Naive thymus-derived CD4-positive, alpha-beta T cell (primary cell): ENCODE measurements at regions of chr5 and their contacts with region 1.

Region 1: DNA sequence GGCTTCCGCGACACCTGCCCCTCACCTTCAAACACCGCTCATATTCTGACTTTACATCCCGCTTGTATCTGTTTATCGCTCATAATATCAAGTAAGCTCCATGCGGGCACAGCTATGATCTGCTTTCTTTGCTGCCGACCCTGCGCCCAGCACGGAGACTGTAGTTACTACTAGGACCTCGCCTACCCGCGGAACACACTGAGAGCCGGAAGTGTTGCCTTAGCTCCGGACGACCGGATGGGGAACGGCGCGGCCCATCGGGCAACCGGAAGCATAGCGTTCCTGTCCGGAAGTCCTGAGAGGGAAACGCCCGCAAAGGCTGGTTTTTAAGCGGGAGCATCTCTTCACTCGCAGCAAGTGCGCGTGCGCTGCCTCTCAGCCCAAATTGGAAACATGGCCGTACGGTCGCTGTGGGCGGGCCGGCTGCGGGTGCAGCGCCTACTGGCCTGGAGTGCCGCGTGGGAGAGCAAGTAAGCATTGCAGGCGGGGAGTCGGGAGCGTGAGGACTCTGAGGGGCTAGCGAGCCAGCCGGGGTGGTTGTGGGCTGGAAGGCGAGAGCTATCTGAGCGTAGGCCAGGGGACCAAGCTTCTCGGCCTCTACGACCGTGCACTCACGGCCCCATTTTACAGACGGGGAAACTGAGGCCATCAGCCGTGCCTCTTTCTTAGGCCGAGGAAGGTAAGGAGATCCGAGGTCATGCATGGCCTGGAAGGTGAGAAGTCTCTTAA is at the start of gene GRPEL2:
- DNase-seq: peak; percentile 62 to 90 (median 80)
- ATAC-seq: peak; percentile 78
- H3K4me3 ChIP-seq: peak within 1 kb of the TSS; percentile 90
- H3K4me3 Mint-ChIP-seq: peak within 1 kb of the TSS; percentile 80 to 97 (median 93)
- H3K27ac ChIP-seq: peak within 1 kb of the TSS; percentile 75
- H3K27ac Mint-ChIP-seq: peak within 1 kb of the TSS; percentile 89 to 95 (median 92)
- H3K4me1 ChIP-seq: peaks cover 37 to 43% of the 10 kb centered on the region in 2 donors
- H3K4me1 Mint-ChIP-seq: peaks cover 47 to 69% (median 59%) of the 10 kb centered on the region in 7 donors
- H3K27me3 ChIP-seq: no peaks in the 10 kb centered on the region
- H3K27me3 Mint-ChIP-seq: peaks cover 0 to 1% (median 0%) of the 10 kb centered on the region in 5 donors
- total RNA-seq, gene GRPEL2: 12.0 to 40.1 (median 32.2) TPM

Region 2: DNA sequence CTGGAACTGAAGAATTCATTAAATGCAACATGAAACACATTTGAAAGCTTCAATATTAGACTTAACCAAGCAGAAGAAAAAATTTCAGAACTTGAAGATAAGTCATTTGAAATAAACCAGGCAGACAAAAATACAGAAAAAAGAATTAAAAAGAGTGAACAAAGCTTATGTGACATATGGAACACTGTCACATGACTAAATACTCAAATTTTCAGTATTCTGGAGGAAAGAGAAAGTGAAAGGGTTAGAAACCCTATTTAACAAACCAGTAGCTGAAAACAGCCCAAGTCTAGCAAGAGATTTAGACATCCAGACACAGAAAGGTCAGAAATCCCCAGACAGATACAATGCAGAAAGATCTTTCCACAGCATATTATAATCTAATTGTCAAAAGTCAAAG is 245.4 kb before region 1 on chr5:
- CTCF ChIA-PET with region 1: no interaction called
- POLR2A ChIA-PET with region 1: no interaction called
- intact Hi-C with region 1: no loop called
- DNase-seq: no peak
- ATAC-seq: no peak
- H3K4me3 ChIP-seq: no peak overlapping the region
- H3K4me3 Mint-ChIP-seq: no peak overlapping the region
- H3K27ac ChIP-seq: no peak overlapping the region
- H3K27ac Mint-ChIP-seq: no peak overlapping the region
- H3K4me1 ChIP-seq: no peaks in the 10 kb centered on the region
- H3K4me1 Mint-ChIP-seq: peaks cover 0 to 4% (median 0%) of the 10 kb centered on the region in 7 donors
- H3K27me3 ChIP-seq: no peaks in the 10 kb centered on the region
- H3K27me3 Mint-ChIP-seq: peaks cover 0 to 17% (median 12%) of the 10 kb centered on the region in 5 donors

Region 3: GRCh38 chr5:149240354-149240998 is 104.8 kb before region 1 on chr5:
- CTCF ChIA-PET with region 1: no interaction called
- POLR2A ChIA-PET with region 1: interaction called, 3 read pairs
- intact Hi-C with region 1: loop called in 1 of 2 experiments (anchors 1 kb)
- DNase-seq: peak; percentile 46 to 94 (median 90)
- ATAC-seq: peak; percentile 93
- H3K4me3 ChIP-seq: peak overlapping the region; percentile 2
- H3K4me3 Mint-ChIP-seq: peak overlapping the region; percentile 38 to 79 (median 66)
- H3K27ac ChIP-seq: peak overlapping the region; percentile 67
- H3K27ac Mint-ChIP-seq: peak overlapping the region; percentile 83 to 98 (median 93)
- H3K4me1 ChIP-seq: peaks cover 21 to 39% of the 10 kb centered on the region in 2 donors
- H3K4me1 Mint-ChIP-seq: peaks cover 8 to 71% (median 43%) of the 10 kb centered on the region in 7 donors
- H3K27me3 ChIP-seq: no peaks in the 10 kb centered on the region
- H3K27me3 Mint-ChIP-seq: peaks cover 0 to 23% (median 1%) of the 10 kb centered on the region in 5 donors

Region 4: GRCh38 chr5:149317281-149318048 is 27.8 kb before region 1 on chr5:
- CTCF ChIA-PET with region 1: interaction called, 4 read pairs
- POLR2A ChIA-PET with region 1: interaction called, 7 read pairs
- intact Hi-C with region 1: loop called in 1 of 2 experiments (anchors 1 kb)
- DNase-seq: peak in 7 of 9 donors; percentile 18 to 66 (median 57)
- ATAC-seq: peak; percentile 77
- H3K4me3 ChIP-seq: no peak overlapping the region
- H3K4me3 Mint-ChIP-seq: no peak overlapping the region
- H3K27ac ChIP-seq: no peak overlapping the region
- H3K27ac Mint-ChIP-seq: peak overlapping the region in 1 of 9 donors; percentile 4
- H3K4me1 ChIP-seq: peaks cover 0 to 3% of the 10 kb centered on the region in 2 donors
- H3K4me1 Mint-ChIP-seq: peaks cover 0 to 5% (median 4%) of the 10 kb centered on the region in 7 donors
- H3K27me3 ChIP-seq: no peaks in the 10 kb centered on the region
- H3K27me3 Mint-ChIP-seq: no peaks in the 10 kb centered on the region

Region 5: GRCh38 chr5:149367249-149367971 is 22.1 kb after region 1 on chr5:
- CTCF ChIA-PET with region 1: interaction called, 24 read pairs
- POLR2A ChIA-PET with region 1: interaction called, 258 read pairs
- intact Hi-C with region 1: loop called in 1 of 2 experiments (anchors 1 kb)
- DNase-seq: peak in 7 of 9 donors; percentile 25 to 65 (median 49)
- ATAC-seq: peak; percentile 79
- H3K4me3 ChIP-seq: no peak overlapping the region
- H3K4me3 Mint-ChIP-seq: no peak overlapping the region
- H3K27ac ChIP-seq: no peak overlapping the region
- H3K27ac Mint-ChIP-seq: peak overlapping the region in 7 of 9 donors; percentile 13 to 68 (median 41)
- H3K4me1 ChIP-seq: peaks cover 0 to 7% of the 10 kb centered on the region in 2 donors
- H3K4me1 Mint-ChIP-seq: peaks cover 3 to 48% (median 27%) of the 10 kb centered on the region in 7 donors
- H3K27me3 ChIP-seq: no peaks in the 10 kb centered on the region
- H3K27me3 Mint-ChIP-seq: no peaks in the 10 kb centered on the region

Region 6: GRCh38 chr5:149526845-149527580 is 181.7 kb after region 1 on chr5:
- CTCF ChIA-PET with region 1: no interaction called
- POLR2A ChIA-PET with region 1: no interaction called
- intact Hi-C with region 1: no loop called
- DNase-seq: no peak
- ATAC-seq: no peak
- H3K4me3 ChIP-seq: no peak overlapping the region
- H3K4me3 Mint-ChIP-seq: peak overlapping the region in 9 of 10 donors; percentile 12 to 65 (median 51)
- H3K27ac ChIP-seq: no peak overlapping the region
- H3K27ac Mint-ChIP-seq: peak overlapping the region in 8 of 9 donors; percentile 0 to 86 (median 54)
- H3K4me1 ChIP-seq: peaks cover 37 to 51% of the 10 kb centered on the region in 2 donors
- H3K4me1 Mint-ChIP-seq: peaks cover 61 to 100% (median 89%) of the 10 kb centered on the region in 7 donors
- H3K27me3 ChIP-seq: no peaks in the 10 kb centered on the region
- H3K27me3 Mint-ChIP-seq: no peaks in the 10 kb centered on the region

Region 7: DNA sequence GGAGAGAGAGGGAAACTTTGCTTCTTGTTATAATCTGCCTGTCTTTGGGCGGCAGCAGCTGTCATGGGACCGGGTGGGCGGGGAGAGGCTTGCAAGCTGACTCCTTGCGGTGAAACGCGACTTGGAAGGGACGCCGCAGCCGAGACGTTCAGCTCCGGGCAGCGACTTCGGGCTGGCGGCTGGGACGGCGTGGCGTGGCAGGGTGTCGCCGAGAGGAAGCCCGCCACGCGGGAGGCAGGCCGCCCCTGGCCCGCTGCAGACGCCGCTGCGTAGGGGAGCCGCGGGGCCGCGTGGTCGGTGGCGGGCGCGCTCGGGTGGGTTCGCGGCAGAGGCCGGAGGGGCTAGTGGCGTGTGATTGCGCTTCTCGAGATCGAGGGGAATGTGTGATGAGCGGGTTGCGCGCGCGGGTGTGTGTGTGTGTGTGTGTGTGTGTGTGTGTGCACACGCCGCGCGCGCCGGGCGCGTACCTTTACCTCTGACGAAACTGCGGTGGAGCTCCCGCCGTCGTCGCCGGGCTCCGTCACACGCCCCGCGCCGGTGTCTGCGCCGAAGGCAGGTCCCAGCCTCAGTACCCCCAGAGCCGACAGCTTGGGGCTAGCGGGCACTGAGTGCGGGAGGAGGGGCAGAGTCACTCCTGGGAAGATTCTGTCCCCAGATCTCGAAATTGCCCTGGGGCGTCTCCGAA is 386.5 kb after region 1 on chr5:
- CTCF ChIA-PET with region 1: no interaction called
- POLR2A ChIA-PET with region 1: no interaction called
- intact Hi-C with region 1: loop called (anchors 2 to 10 kb)
- DNase-seq: peak; percentile 52 to 84 (median 67)
- ATAC-seq: peak; percentile 64
- H3K4me3 ChIP-seq: peak overlapping the region; percentile 84
- H3K4me3 Mint-ChIP-seq: peak overlapping the region; percentile 77 to 92 (median 87)
- H3K27ac ChIP-seq: peak overlapping the region; percentile 67
- H3K27ac Mint-ChIP-seq: peak overlapping the region in 8 of 9 donors; percentile 38 to 93 (median 78)
- H3K4me1 ChIP-seq: no peaks in the 10 kb centered on the region
- H3K4me1 Mint-ChIP-seq: peaks cover 0 to 17% (median 8%) of the 10 kb centered on the region in 7 donors
- H3K27me3 ChIP-seq: no peaks in the 10 kb centered on the region
- H3K27me3 Mint-ChIP-seq: peaks cover 0 to 18% (median 0%) of the 10 kb centered on the region in 5 donors

Region 8: DNA sequence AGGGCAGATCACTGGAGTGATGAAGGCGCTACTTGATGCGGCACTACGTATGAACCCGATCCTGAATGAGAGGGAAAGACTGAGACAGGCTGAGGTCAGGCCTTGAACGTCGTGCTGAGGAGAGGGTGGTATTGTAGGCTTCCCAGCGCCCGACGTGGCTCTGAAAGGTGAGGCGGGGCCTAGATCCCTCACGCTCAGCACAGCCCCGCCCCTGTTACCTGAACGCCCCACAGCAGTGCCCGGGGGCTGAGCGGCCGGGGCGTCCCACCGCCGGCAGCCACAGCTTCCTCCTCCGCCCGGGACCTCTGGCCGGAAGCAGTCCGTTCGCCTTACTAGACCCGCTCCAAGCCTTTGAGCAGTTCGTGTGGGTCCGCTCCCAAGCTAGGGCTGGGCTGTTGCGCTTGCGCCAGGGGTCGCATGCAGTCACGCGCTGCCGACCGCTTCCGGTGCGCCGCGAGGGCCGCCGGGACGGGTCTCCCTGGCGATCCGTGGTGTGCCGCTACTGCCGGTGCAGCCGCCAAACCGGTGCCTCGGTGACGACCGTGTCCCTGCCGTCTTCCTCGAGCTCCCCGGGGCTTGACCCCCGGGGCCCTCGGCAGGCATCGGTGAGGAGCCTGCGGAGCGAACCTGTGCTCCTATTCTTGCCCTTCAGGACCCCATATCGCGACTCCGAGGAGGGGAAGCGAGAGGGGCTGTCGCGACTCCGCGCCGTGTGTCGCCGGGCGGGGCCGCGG is 655.1 kb after region 1 on chr5 and contains the starts of genes HMGXB3 and TIGD6:
- CTCF ChIA-PET with region 1: no interaction called
- POLR2A ChIA-PET with region 1: no interaction called
- intact Hi-C with region 1: loop called in 1 of 2 experiments (anchors 2 kb)
- DNase-seq: peak; percentile 64 to 87 (median 74)
- ATAC-seq: peak; percentile 83
- H3K4me3 ChIP-seq: peak within 1 kb of the TSS; percentile 76
- H3K4me3 Mint-ChIP-seq: peak within 1 kb of the TSS; percentile 86 to 99 (median 93)
- H3K27ac ChIP-seq: peak within 1 kb of the TSS; percentile 80
- H3K27ac Mint-ChIP-seq: peak within 1 kb of the TSS; percentile 75 to 98 (median 94)
- H3K4me1 ChIP-seq: peaks cover 18 to 23% of the 10 kb centered on the region in 2 donors
- H3K4me1 Mint-ChIP-seq: peaks cover 33 to 55% (median 46%) of the 10 kb centered on the region in 7 donors
- H3K27me3 ChIP-seq: no peaks in the 10 kb centered on the region
- H3K27me3 Mint-ChIP-seq: no peaks in the 10 kb centered on the region
- total RNA-seq, gene HMGXB3: 27.2 to 40.6 (median 34.5) TPM
- total RNA-seq, gene TIGD6: 2.3 to 7.4 (median 2.8) TPM